K562 (cell line): ENCODE measurements at regions of chr15 and their contacts with region 1.

Region 1: DNA sequence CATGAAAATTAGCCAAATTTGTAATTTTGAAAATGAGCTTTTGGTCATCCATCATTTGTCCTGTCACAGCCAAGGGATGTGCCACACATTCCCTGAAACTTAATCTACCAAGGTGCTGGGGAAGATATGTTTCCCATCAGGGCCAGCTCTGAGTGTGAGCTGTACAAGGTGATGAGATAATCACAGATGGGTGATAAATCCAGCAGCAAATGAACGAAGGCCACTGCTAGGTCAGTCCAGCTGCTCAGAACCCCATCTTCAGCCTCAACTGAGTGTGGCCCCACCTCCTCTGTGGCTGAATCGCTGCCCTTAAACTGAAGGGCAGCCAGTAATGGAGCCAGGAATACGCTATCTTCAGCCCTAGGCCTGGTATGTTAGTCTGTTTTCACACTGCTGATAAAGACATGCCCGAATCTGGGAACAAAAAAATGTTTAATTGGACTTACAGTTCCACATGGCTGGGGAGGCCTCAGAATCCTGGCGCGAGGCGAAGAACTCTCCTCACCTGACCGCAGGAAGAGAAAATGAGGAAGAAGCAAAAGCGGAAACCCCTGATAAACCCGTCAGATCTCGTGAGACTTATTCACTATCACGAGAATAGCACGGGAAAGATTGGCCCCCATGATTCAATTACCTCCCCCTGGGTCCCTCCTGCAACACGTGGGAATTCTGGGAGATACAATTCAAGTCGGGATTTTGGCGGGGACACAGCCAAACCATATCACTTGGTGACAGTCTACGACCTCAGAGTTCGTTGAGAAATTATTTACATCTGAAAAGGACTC is 553.0 kb downstream of the NTRK3 start:
- DNase-seq: peak in 3 of 4 experiments; percentile 15 to 47 (median 33)
- ATAC-seq: peak; percentile 77
- H3K4me3 ChIP-seq: peak overlapping the region; percentile 48
- H3K27ac ChIP-seq: peak overlapping the region; percentile 54
- H3K4me1 ChIP-seq: peaks cover 3 to 12% of the 10 kb centered on the region in 2 experiments; a peak in 3 of 5 replicates
- H3K27me3 ChIP-seq: no peaks in the 10 kb centered on the region
- CTCF ChIP-seq: no peak
- EP300 ChIP-seq: no peak
- POLR2A ChIP-seq: peak; percentile 78
- RAD21 ChIP-seq: no peak

Region 2: DNA sequence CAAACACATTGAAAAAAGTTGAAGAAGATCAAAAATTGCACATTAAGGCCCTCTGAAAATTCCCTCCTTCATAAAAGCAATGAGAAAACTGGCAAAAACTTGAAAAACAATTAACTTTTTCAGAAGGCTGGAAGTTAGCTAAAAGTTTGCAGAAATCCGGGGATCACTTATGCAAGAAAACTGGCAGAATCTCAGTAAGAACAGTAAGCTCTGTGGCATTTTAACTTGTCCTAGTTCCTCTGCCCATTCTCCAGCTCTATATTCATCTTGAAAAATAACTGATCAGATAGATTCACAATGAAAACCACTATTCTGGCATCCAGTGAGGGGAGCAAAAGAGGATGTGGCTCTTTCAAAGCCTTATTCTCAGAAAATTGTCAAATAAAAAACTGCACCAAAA is 13.8 kb before region 1 on chr15:
- CTCF ChIA-PET with region 1: no interaction called
- POLR2A ChIA-PET with region 1: interaction called, 17 read pairs
- in situ Hi-C with region 1: no loop called
- intact Hi-C with region 1: no loop called
- DNase-seq: no peak
- ATAC-seq: no peak
- H3K4me3 ChIP-seq: no peak overlapping the region
- H3K27ac ChIP-seq: no peak overlapping the region
- H3K4me1 ChIP-seq: peaks cover 0 to 21% of the 10 kb centered on the region in 2 experiments; a peak in 3 of 5 replicates
- H3K27me3 ChIP-seq: no peaks in the 10 kb centered on the region
- CTCF ChIP-seq: no peak
- EP300 ChIP-seq: no peak
- POLR2A ChIP-seq: no peak
- RAD21 ChIP-seq: no peak